Natural killer cell (primary cell): ENCODE measurements at regions of chr1 and their contacts with region 1.

Region 1: GRCh38 chr1:6343506-6344405 is 49.8 kb downstream of the ACOT7 start:
- DNase-seq: peak; percentile 74 to 76
- ATAC-seq: peak; percentile 78 to 82 (median 79)
- H3K4me3 ChIP-seq: no peak overlapping the region
- H3K4me3 Mint-ChIP-seq: no peak overlapping the region
- H3K27ac ChIP-seq: no peak overlapping the region
- H3K27ac Mint-ChIP-seq: no peak overlapping the region
- H3K4me1 ChIP-seq: peaks cover 15% of the 10 kb centered on the region
- H3K4me1 Mint-ChIP-seq: peaks cover 11 to 23% of the 10 kb centered on the region in 2 donors
- H3K27me3 ChIP-seq: no peaks in the 10 kb centered on the region
- H3K27me3 Mint-ChIP-seq: no peaks in the 10 kb centered on the region
- CTCF ChIP-seq: peak; percentile 81

Region 2: GRCh38 chr1:6026095-6026809 is 317.5 kb before region 1 on chr1:
- intact Hi-C with region 1: loop called (anchors 2 kb)
- DNase-seq: peak; percentile 92 to 97
- ATAC-seq: peak; percentile 67 to 89 (median 84)
- H3K4me3 ChIP-seq: peak overlapping the region; percentile 55
- H3K4me3 Mint-ChIP-seq: peak overlapping the region; percentile 93
- H3K27ac ChIP-seq: peak overlapping the region; percentile 95
- H3K27ac Mint-ChIP-seq: peak overlapping the region; percentile 70 to 100
- H3K4me1 ChIP-seq: peaks cover 66% of the 10 kb centered on the region
- H3K4me1 Mint-ChIP-seq: peaks cover 58 to 72% of the 10 kb centered on the region in 2 donors
- H3K27me3 ChIP-seq: no peaks in the 10 kb centered on the region
- H3K27me3 Mint-ChIP-seq: peaks cover 0 to 3% of the 10 kb centered on the region in 2 donors
- CTCF ChIP-seq: no peak

Region 3: GRCh38 chr1:6245086-6245868 is 98.5 kb before region 1 on chr1:
- intact Hi-C with region 1: loop called (anchors 1 kb)
- DNase-seq: peak; percentile 85 to 92
- ATAC-seq: peak; percentile 85 to 91 (median 87)
- H3K4me3 ChIP-seq: no peak overlapping the region
- H3K4me3 Mint-ChIP-seq: no peak overlapping the region
- H3K27ac ChIP-seq: no peak overlapping the region
- H3K27ac Mint-ChIP-seq: no peak overlapping the region
- H3K4me1 ChIP-seq: peaks cover 31% of the 10 kb centered on the region
- H3K4me1 Mint-ChIP-seq: peaks cover 5 to 16% of the 10 kb centered on the region in 2 donors
- H3K27me3 ChIP-seq: peaks cover 56% of the 10 kb centered on the region
- H3K27me3 Mint-ChIP-seq: peaks cover 20 to 43% of the 10 kb centered on the region in 2 donors
- CTCF ChIP-seq: peak; percentile 71

Region 4: DNA sequence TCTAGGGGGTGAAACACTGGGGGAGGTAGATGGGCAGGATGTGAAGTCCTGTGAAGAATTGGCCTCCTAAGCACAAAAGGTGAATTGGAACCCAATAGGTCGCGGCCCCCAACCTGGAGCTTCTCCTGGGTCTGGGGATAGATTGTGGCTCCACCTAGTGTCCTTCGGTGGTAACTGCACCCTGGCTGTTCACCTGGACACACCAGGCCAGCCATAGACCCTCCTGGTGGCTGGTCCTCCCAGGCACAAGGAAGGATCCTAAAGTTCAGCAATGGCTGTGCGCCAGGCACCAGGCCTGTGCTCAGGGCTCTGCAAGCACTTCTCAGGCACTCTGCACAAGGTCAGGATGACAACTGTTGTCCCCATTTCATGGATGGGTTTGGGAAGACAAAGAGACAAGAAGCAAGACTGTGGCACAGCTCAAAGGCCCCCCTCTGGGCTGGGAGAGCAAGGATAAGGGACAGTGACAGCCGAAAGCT is 94.3 kb after region 1 on chr1:
- intact Hi-C with region 1: loop called (anchors 1 kb)
- DNase-seq: peak; percentile 64 to 86
- ATAC-seq: peak; percentile 59 to 72 (median 64)
- H3K4me3 ChIP-seq: no peak overlapping the region
- H3K4me3 Mint-ChIP-seq: peak overlapping the region; percentile 73
- H3K27ac ChIP-seq: no peak overlapping the region
- H3K27ac Mint-ChIP-seq: no peak overlapping the region
- H3K4me1 ChIP-seq: peaks cover 8% of the 10 kb centered on the region
- H3K4me1 Mint-ChIP-seq: peaks cover 5 to 19% of the 10 kb centered on the region in 2 donors
- H3K27me3 ChIP-seq: peaks cover 10% of the 10 kb centered on the region
- H3K27me3 Mint-ChIP-seq: peaks cover 20 to 32% of the 10 kb centered on the region in 2 donors
- CTCF ChIP-seq: peak; percentile 90